ENCODE measurements at regions of chr6 and their contacts with region 1.

Region 1: GRCh38 chr6:134123666-134124208 is 71.3 kb upstream of the SLC2A12 start:
- DNase-seq: no peak
- H3K4me3 Mint-ChIP-seq: no peak overlapping the region
- H3K27ac Mint-ChIP-seq: no peak overlapping the region
- H3K4me1 Mint-ChIP-seq: no peaks in the 10 kb centered on the region
- H3K27me3 Mint-ChIP-seq: no peaks in the 10 kb centered on the region

Region 2: DNA sequence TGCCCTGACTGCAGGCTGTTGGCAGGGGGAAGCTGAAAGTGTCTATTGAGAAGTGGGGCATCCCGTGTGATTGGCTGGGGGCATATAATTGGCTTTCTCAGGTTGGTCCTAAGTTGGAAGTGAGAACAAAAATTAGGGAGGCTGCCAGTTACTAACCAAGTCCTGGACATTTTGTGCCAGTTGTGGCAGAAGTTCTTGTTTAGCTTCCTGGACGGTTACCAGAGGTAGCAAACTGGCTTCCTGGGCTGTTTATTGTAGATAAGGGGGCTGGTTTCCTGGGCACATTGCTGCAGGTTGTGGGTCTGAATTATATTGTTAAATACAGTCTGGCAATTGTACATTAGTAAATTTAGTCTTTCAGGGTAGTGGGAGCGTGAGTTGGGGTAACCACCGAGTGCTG is 20.7 kb before region 1 on chr6:
- CTCF ChIA-PET with region 1: interaction called, 64 read pairs
- intact Hi-C with region 1: no loop called
- DNase-seq: no peak
- H3K4me3 Mint-ChIP-seq: no peak overlapping the region
- H3K27ac Mint-ChIP-seq: no peak overlapping the region
- H3K4me1 Mint-ChIP-seq: no peaks in the 10 kb centered on the region
- H3K27me3 Mint-ChIP-seq: peaks cover 9% of the 10 kb centered on the region

Region 3: DNA sequence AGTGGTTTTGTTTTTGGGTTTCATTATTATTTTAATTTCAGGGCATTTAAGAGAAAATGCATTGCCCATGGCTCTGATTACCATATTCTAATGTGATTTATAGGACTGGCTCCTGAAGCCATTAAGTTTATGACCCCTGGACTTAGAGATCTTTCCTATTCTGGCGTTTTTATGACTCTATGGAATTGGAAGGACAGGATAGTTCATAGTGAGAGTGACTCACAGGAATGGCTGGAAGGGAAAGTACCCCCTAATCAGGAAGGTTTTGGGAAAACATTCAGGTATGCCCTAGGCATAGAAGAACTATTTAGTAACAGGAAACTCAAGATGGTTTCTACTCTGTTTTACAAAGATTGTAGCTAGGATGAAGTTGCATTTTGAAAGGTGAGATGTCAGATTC is 37.3 kb after region 1 on chr6:
- CTCF ChIA-PET with region 1: interaction called, 16 read pairs
- intact Hi-C with region 1: loop called (anchors 2 kb)
- DNase-seq: no peak
- H3K4me3 Mint-ChIP-seq: no peak overlapping the region
- H3K27ac Mint-ChIP-seq: no peak overlapping the region
- H3K4me1 Mint-ChIP-seq: peaks cover 4% of the 10 kb centered on the region
- H3K27me3 Mint-ChIP-seq: no peaks in the 10 kb centered on the region

Region 4: GRCh38 chr6:134299236-134299635 is 175.5 kb after region 1 on chr6:
- CTCF ChIA-PET with region 1: no interaction called
- intact Hi-C with region 1: no loop called
- DNase-seq: no peak
- H3K4me3 Mint-ChIP-seq: no peak overlapping the region
- H3K27ac Mint-ChIP-seq: no peak overlapping the region
- H3K4me1 Mint-ChIP-seq: peaks cover 21% of the 10 kb centered on the region
- H3K27me3 Mint-ChIP-seq: no peaks in the 10 kb centered on the region

Region 5: GRCh38 chr6:134822920-134823709 is 699.4 kb after region 1 on chr6:
- CTCF ChIA-PET with region 1: interaction called, 27 read pairs
- intact Hi-C with region 1: loop called (anchors 1 kb)
- DNase-seq: peak; percentile 39
- H3K4me3 Mint-ChIP-seq: no peak overlapping the region
- H3K27ac Mint-ChIP-seq: no peak overlapping the region
- H3K4me1 Mint-ChIP-seq: no peaks in the 10 kb centered on the region
- H3K27me3 Mint-ChIP-seq: no peaks in the 10 kb centered on the region

Region 6: DNA sequence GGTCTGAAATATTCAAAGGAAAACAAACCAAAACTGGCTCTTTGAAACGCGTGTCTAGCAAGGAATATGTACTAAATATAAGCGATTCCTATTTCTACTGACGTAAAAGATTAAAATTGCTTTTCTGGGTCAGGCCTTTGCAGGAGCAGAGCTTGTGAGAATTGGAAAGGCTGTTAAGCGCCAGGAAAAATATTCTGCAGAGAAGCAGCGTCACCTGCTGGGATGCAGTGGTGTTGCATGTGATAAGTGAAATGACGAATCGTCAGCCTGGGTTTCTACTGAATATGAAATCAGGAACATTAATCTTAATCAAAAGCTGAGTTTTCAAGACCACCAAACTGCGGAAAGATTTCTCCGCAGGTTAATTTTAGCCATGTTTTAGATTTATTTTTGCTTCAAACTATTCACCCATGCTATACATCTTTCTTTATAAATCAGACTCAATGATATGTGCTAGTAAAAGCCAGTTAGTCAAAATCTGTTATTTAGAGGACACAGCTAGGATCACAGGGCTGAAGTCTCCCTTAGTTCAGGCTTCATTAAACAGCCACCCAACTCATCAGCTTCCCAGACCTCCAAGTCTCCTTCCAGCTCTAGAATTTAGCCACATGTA is 758.8 kb after region 1 on chr6:
- CTCF ChIA-PET with region 1: interaction called, 11 read pairs
- intact Hi-C with region 1: loop called (anchors 1 kb)
- DNase-seq: peak; percentile 80
- H3K4me3 Mint-ChIP-seq: no peak overlapping the region
- H3K27ac Mint-ChIP-seq: no peak overlapping the region
- H3K4me1 Mint-ChIP-seq: no peaks in the 10 kb centered on the region
- H3K27me3 Mint-ChIP-seq: peaks cover 10% of the 10 kb centered on the region